Heart left ventricle (tissue), 16 donors: ENCODE measurements at regions of chr13 and their contacts with region 1.

Region 1: GRCh38 chr13:41658056-41658661 is 200.8 kb downstream of the RGCC start:
- DNase-seq: no peak
- ATAC-seq: no peak
- H3K4me3 ChIP-seq: no peak overlapping the region
- H3K27ac ChIP-seq: no peak overlapping the region
- H3K4me1 ChIP-seq: peaks cover 0 to 2% (median 0%) of the 10 kb centered on the region in 12 donors
- H3K27me3 ChIP-seq: no peaks in the 10 kb centered on the region
- CTCF ChIP-seq: no peak
- POLR2A ChIP-seq: no peak

Region 2: DNA sequence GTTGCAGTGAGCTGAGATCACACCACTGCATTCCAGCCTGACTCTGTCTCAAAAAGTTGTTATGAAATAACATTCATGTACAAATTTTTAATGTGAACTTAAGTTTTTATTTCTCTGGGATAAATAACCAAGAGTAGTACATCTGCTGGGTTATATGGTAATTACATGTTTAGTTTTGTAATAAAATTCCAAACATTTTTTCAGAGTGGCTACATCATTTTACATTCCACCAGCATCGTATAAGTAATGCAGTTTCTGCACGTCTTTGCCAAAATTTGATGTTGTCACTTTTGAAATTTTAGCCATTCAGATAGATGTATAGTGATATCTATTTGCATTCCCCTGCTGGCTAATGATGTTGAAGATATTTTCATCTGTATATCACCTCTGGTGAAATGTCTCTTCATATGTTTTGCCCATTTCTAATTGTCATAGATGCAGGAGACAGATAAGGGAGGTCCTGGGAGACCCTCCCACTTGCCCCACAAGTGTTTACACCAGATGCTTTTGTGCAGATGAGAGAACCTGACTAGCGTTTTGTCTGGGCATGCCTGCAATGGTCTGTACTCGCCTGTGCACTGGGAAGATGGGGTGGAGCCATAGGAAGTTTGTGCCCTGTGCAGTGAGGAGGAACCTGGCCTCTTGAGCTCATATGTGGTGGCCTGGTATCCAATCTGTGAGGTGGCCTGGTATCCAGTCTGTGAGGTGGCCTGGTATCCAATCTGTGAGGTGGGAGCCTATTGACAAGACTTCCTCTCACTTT is 512.8 kb before region 1 on chr13:
- intact Hi-C with region 1: no loop called
- DNase-seq: no peak
- ATAC-seq: no peak
- H3K4me3 ChIP-seq: no peak overlapping the region
- H3K27ac ChIP-seq: no peak overlapping the region
- H3K4me1 ChIP-seq: no peaks in the 10 kb centered on the region
- H3K27me3 ChIP-seq: no peaks in the 10 kb centered on the region
- CTCF ChIP-seq: no peak
- POLR2A ChIP-seq: no peak

Region 3: GRCh38 chr13:41352935-41353840 is 305.0 kb before region 1 on chr13:
- intact Hi-C with region 1: loop called in 9 of 10 experiments (anchors 2 to 5 kb)
- DNase-seq: peak in 1 of 5 donors; percentile 40
- ATAC-seq: peak in 3 of 4 donors; percentile 38 to 58 (median 46)
- H3K4me3 ChIP-seq: no peak overlapping the region
- H3K27ac ChIP-seq: peak overlapping the region in 1 of 12 donors; percentile 44
- H3K4me1 ChIP-seq: peaks cover 0 to 26% (median 0%) of the 10 kb centered on the region in 12 donors
- H3K27me3 ChIP-seq: no peaks in the 10 kb centered on the region
- CTCF ChIP-seq: peak; percentile 72 to 89 (median 83)
- POLR2A ChIP-seq: no peak